Heart right ventricle (tissue), 16 donors: ENCODE measurements at regions of chr1 and their contacts with region 1.

Region 1: DNA sequence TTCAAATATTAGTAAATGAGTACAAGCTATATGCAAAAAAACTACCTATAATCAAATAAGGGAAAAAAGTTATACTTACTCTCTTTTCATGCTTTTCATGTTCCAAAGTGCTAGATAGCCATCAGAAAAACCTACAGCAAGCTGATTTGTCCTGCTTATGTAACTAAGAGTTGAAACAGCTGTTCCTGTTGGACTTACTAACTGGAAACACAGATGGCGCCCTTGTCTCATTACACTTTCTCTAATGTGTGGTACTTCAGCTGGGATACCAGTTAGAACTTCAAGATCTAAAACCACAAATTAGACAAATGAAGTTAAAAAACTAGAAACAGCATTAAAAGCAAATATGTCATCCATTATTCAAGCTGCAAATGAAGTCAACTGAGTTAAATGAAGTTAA is 24.3 kb downstream of the AHCTF1 start:
- DNase-seq: peak in 1 of 2 donors; percentile 28
- ATAC-seq: peak in 5 of 8 donors; percentile 61 to 82 (median 78)
- H3K4me3 ChIP-seq: no peak overlapping the region
- H3K27ac ChIP-seq: no peak overlapping the region
- H3K4me1 ChIP-seq: peaks cover 0 to 19% (median 6%) of the 10 kb centered on the region in 9 donors
- H3K27me3 ChIP-seq: no peaks in the 10 kb centered on the region
- CTCF ChIP-seq: peak in 8 of 9 donors; percentile 13 to 70 (median 57)

Region 2: GRCh38 chr1:246753670-246754535 is 153.6 kb before region 1 on chr1:
- intact Hi-C with region 1: no loop called
- DNase-seq: peak; percentile 42 to 53
- ATAC-seq: peak; percentile 43 to 86 (median 76)
- H3K4me3 ChIP-seq: no peak overlapping the region
- H3K27ac ChIP-seq: no peak overlapping the region
- H3K4me1 ChIP-seq: no peaks in the 10 kb centered on the region
- H3K27me3 ChIP-seq: no peaks in the 10 kb centered on the region
- CTCF ChIP-seq: peak; percentile 51 to 81 (median 76)

Region 3: GRCh38 chr1:246947255-246947654 is 39.8 kb after region 1 on chr1:
- intact Hi-C with region 1: loop called in 1 of 10 experiments (anchors 5 kb)
- DNase-seq: peak in 1 of 2 donors; percentile 60
- ATAC-seq: peak; percentile 43 to 98 (median 96)
- H3K4me3 ChIP-seq: no peak overlapping the region
- H3K27ac ChIP-seq: peak overlapping the region; percentile 3 to 78 (median 66)
- H3K4me1 ChIP-seq: peaks cover 0 to 20% (median 8%) of the 10 kb centered on the region in 9 donors
- H3K27me3 ChIP-seq: no peaks in the 10 kb centered on the region
- CTCF ChIP-seq: no peak

Region 4: DNA sequence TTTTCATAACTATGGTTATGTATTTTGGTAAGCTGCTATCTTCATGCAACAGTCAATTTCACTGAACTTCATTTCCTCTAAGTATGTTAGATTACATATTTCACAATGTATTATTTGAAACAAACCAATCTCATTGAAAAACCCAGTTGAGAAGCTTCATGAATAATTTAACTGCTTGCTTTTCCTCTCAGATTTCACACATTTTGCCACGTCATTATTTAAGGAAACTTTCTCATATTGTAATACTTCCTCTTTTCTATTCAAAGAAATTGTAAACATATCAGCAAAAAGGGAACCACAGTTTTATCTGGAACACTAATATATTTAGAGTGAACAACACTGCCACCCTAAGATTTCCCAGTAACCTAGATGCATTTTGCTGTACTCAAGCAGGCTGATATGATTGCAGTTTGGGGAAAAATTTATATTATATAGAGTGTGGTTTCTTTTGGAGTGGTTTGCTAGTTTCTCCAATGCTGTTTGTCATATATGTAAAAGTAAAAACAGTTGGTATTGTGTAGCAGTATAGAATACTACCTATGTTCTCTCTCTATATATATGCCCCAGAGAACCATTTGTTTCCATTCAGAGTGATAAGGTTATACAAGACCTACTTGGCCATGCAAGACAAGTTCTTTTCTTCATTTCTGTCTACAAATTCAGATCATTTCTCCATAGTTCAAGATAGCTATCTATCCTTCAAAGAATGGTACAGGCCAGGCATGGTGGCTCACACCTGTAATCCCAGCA is 52.6 kb after region 1 on chr1:
- intact Hi-C with region 1: loop called in 3 of 10 experiments (anchors 5 to 10 kb)
- DNase-seq: no peak
- ATAC-seq: peak in 1 of 8 donors; percentile 58
- H3K4me3 ChIP-seq: peak overlapping the region in 1 of 10 donors; percentile 6
- H3K27ac ChIP-seq: peak overlapping the region in 1 of 10 donors; percentile 88
- H3K4me1 ChIP-seq: peaks cover 0 to 38% (median 0%) of the 10 kb centered on the region in 9 donors
- H3K27me3 ChIP-seq: no peaks in the 10 kb centered on the region
- CTCF ChIP-seq: peak in 4 of 9 donors; percentile 23 to 27 (median 25)

Region 5: GRCh38 chr1:246971090-246971721 is 63.7 kb after region 1 on chr1:
- intact Hi-C with region 1: loop called in 8 of 10 experiments (anchors 5 to 10 kb)
- DNase-seq: peak; percentile 63 to 69
- ATAC-seq: peak in 6 of 8 donors; percentile 11 to 68 (median 64)
- H3K4me3 ChIP-seq: peak overlapping the region in 4 of 10 donors; percentile 18 to 36 (median 33)
- H3K27ac ChIP-seq: no peak overlapping the region
- H3K4me1 ChIP-seq: no peaks in the 10 kb centered on the region
- H3K27me3 ChIP-seq: no peaks in the 10 kb centered on the region
- CTCF ChIP-seq: peak; percentile 81 to 93 (median 88)